ENCODE measurements at regions of chr13 and their contacts with region 1.

Region 1: DNA sequence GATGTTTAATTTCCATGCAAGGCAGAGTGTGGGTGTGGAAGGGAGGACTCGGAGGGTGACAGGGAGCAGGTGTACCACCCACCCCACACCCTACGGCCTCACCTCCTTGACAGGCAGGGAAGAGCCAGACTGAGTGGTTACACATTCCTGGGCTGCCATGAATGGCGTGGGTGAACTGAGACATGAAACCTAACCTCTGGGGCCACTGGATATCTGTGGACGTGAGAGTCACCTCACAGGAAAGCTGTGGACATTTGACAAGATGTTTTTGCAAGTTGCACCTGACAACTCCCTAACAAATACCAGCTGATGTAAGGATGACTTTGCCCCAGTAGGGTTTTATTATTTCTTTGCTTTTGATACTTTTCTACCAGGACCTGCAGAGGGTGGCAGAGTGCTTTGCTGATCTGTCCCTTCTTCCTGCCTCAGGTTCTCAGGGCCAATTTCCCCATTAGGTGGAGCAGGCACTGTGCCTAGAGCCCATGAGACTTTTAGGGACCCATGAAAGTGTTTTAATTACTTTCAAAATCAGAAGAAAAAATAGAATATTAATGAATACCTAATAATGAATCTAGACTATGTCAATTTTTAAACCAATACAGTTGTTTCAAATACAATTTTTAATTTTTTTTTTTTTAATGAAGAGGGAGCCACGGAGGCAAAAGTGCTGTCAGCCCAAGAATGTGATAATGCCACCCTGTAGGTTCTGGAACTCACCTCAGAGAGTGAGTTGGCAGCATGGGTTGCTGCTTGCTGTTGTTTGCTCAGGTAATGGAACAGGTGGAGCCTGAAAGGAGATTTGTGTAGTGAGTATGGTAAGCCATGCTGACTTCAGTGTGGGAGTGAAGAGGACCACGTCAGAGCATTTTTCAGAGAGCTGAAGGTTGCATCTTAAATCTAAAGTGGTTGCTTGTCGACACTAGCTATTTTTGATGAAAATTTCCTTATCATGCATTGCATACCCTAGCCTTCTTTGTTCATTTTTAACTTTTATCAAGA is 58.0 kb upstream of the CYSLTR2 start:
- H3K4me3 Mint-ChIP-seq: no peak overlapping the region
- H3K27ac Mint-ChIP-seq: no peak overlapping the region
- H3K4me1 Mint-ChIP-seq: peaks cover 13% of the 10 kb centered on the region
- H3K27me3 Mint-ChIP-seq: no peaks in the 10 kb centered on the region

Region 2: GRCh38 chr13:48437371-48437770 is 158.4 kb before region 1 on chr13:
- intact Hi-C with region 1: no loop called
- H3K4me3 Mint-ChIP-seq: no peak overlapping the region
- H3K27ac Mint-ChIP-seq: peak overlapping the region; percentile 93
- H3K4me1 Mint-ChIP-seq: peaks cover 48% of the 10 kb centered on the region
- H3K27me3 Mint-ChIP-seq: no peaks in the 10 kb centered on the region

Region 3: DNA sequence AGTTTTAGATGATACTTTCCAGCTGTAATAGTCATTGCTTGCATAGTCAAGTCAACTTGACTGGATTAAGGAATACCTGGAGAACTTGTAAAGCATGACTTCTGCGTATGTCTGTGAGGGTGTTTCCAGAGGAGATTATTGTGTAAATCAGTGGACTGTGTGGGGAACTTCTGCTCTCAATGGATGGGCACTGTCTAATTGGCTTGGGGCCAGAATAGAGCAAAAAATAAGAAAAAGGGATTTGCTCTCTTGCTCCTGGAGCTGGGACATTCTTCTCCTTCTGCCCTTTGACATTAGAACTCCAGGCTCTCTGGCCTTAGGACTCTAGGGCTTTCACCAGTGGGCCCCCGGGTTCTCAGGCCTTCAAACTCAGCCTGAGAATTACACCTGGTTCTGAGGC is 91.1 kb after region 1 on chr13:
- intact Hi-C with region 1: loop called (anchors 5 kb)
- H3K4me3 Mint-ChIP-seq: no peak overlapping the region
- H3K27ac Mint-ChIP-seq: no peak overlapping the region
- H3K4me1 Mint-ChIP-seq: peaks cover 48% of the 10 kb centered on the region
- H3K27me3 Mint-ChIP-seq: no peaks in the 10 kb centered on the region

Region 4: GRCh38 chr13:48731957-48732569 is 136.3 kb after region 1 on chr13:
- intact Hi-C with region 1: loop called (anchors 1 kb)
- H3K4me3 Mint-ChIP-seq: peak overlapping the region; percentile 73
- H3K27ac Mint-ChIP-seq: no peak overlapping the region
- H3K4me1 Mint-ChIP-seq: peaks cover 31% of the 10 kb centered on the region
- H3K27me3 Mint-ChIP-seq: no peaks in the 10 kb centered on the region

Measured in dendritic cell treated with granulocyte-macrophage colony-stimulating factor and Interleukin-4, amounts not matched to agents 40 ng/mL and 50 ng/mL, for 4 days (primary cell).